Calu3 (cell line): ENCODE measurements at regions of chr15 and their contacts with region 1.

Region 1: GRCh38 chr15:58070801-58071418 is 5.4 kb upstream of the ALDH1A2 start:
- DNase-seq: peak; percentile 84
- H3K4me3 Mint-ChIP-seq: no peak overlapping the region
- H3K27ac Mint-ChIP-seq: no peak overlapping the region
- H3K4me1 Mint-ChIP-seq: peaks cover 8% of the 10 kb centered on the region
- H3K27me3 Mint-ChIP-seq: peaks cover 15% of the 10 kb centered on the region
- CTCF ChIP-seq: peak; percentile 91

Region 2: DNA sequence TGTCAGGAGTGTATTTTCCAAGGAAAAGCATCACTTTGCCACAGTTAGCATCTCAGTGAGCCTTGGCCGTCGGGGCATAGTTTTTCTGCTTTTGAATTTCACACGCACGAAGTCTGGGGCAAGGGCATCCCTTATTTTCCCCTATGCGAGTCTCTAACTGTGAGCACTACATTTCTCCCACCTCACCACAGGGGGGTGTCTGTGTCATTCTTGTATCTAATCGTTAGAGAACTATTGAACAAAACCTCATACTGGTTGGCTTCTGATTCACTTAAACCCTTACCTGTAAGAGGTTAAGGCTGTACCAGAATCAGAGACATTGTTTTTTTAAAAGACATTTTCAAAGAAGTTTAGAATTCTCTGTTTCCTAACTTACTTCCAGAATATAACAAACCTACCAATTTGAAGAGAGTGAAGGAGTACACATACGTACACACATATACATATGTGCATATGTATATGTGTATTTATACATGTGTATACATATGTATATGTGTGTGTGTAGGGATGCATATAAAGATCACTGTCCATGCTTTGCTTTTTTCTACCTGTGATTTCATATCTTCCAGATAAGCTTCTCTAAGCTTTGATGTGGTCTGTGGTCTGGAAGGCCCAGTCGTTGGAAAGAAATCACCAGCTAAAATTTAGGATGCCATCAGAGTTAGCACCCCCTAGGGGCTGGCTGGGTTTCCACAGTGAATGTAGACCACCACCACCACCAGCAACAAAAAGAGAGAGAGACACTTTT is 429.8 kb before region 1 on chr15:
- CTCF ChIA-PET with region 1: interaction called, 5 read pairs
- intact Hi-C with region 1: loop called (anchors 10 kb)
- DNase-seq: peak; percentile 64
- H3K4me3 Mint-ChIP-seq: no peak overlapping the region
- H3K27ac Mint-ChIP-seq: no peak overlapping the region
- H3K4me1 Mint-ChIP-seq: no peaks in the 10 kb centered on the region
- H3K27me3 Mint-ChIP-seq: no peaks in the 10 kb centered on the region
- CTCF ChIP-seq: peak; percentile 25

Region 3: GRCh38 chr15:57732526-57733331 is 338.2 kb before region 1 on chr15:
- CTCF ChIA-PET with region 1: interaction called, 9 read pairs
- intact Hi-C with region 1: loop called (anchors 1 kb)
- DNase-seq: peak; percentile 78
- H3K4me3 Mint-ChIP-seq: no peak overlapping the region
- H3K27ac Mint-ChIP-seq: no peak overlapping the region
- H3K4me1 Mint-ChIP-seq: no peaks in the 10 kb centered on the region
- H3K27me3 Mint-ChIP-seq: no peaks in the 10 kb centered on the region
- CTCF ChIP-seq: peak; percentile 90

Region 4: GRCh38 chr15:57861036-57861638 is 209.8 kb before region 1 on chr15:
- CTCF ChIA-PET with region 1: interaction called, 45 read pairs
- intact Hi-C with region 1: loop called (anchors 1 kb)
- DNase-seq: peak; percentile 61
- H3K4me3 Mint-ChIP-seq: no peak overlapping the region
- H3K27ac Mint-ChIP-seq: no peak overlapping the region
- H3K4me1 Mint-ChIP-seq: peaks cover 5% of the 10 kb centered on the region
- H3K27me3 Mint-ChIP-seq: peaks cover 21% of the 10 kb centered on the region
- CTCF ChIP-seq: peak; percentile 56

Region 5: DNA sequence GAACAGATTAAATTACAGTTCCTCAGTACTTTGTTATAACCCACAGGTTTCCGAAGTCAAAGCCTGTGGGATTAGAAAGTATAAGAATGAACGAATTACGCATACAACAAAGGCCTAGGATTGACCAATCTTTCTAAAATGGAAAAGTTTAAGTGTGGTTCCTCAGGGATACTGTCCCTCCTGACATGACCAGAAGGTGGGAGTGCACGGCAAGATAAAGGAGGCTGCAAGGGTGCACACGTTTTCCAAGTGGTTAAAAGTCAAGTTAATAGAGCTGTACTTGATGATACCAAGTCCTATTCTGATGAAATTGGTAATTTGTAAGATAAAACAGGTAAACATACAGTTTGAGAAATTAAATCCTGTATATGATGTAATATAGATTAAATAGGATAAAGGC is 101.6 kb before region 1 on chr15:
- CTCF ChIA-PET with region 1: interaction called, 5 read pairs
- intact Hi-C with region 1: loop called (anchors 5 kb)
- DNase-seq: peak; percentile 20
- H3K4me3 Mint-ChIP-seq: no peak overlapping the region
- H3K27ac Mint-ChIP-seq: no peak overlapping the region
- H3K4me1 Mint-ChIP-seq: no peaks in the 10 kb centered on the region
- H3K27me3 Mint-ChIP-seq: no peaks in the 10 kb centered on the region
- CTCF ChIP-seq: no peak

Region 6: GRCh38 chr15:58588096-58588495 is 517.2 kb after region 1 on chr15:
- CTCF ChIA-PET with region 1: no interaction called
- intact Hi-C with region 1: no loop called
- DNase-seq: no peak
- H3K4me3 Mint-ChIP-seq: no peak overlapping the region
- H3K27ac Mint-ChIP-seq: no peak overlapping the region
- H3K4me1 Mint-ChIP-seq: peaks cover 32% of the 10 kb centered on the region
- H3K27me3 Mint-ChIP-seq: no peaks in the 10 kb centered on the region
- CTCF ChIP-seq: no peak